Activated CD8-positive, alpha-beta T cell treated with anti-CD3 and anti-CD28 coated beads for 36 hours (primary cell): ENCODE measurements at regions of chr15 and their contacts with region 1.

Region 1: GRCh38 chr15:80173022-80173759 is 20.4 kb downstream of the FAH start:
- DNase-seq: peak; percentile 82
- ATAC-seq: peak; percentile 95
- H3K4me3 Mint-ChIP-seq: no peak overlapping the region
- H3K27ac Mint-ChIP-seq: no peak overlapping the region
- H3K4me1 Mint-ChIP-seq: no peaks in the 10 kb centered on the region
- H3K27me3 Mint-ChIP-seq: no peaks in the 10 kb centered on the region
- CTCF ChIP-seq: peak; percentile 67

Region 2: DNA sequence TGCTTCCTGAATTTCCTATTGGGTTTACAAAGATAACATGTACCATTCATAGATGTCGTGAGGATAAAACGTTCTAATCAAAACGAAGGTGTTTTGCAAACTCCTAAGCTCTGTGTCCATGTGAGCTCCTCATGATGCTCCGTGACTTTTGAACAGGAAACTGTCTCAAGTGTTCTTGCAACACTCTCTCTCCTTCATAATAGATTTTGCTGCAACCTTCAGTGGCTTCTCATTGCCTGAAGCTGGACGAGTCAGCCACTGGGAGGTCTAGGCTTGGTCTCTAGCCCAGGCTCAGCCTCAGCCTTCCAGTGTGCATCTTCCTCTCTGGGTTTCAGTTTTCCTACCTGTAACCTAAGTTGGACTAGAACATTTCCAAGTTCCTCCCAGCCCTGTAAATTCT is 183.5 kb before region 1 on chr15:
- CTCF ChIA-PET with region 1: interaction called, 16 read pairs
- POLR2A ChIA-PET with region 1: interaction called, 3 read pairs
- intact Hi-C with region 1: no loop called
- DNase-seq: no peak
- ATAC-seq: no peak
- H3K4me3 Mint-ChIP-seq: no peak overlapping the region
- H3K27ac Mint-ChIP-seq: no peak overlapping the region
- H3K4me1 Mint-ChIP-seq: peaks cover 6% of the 10 kb centered on the region
- H3K27me3 Mint-ChIP-seq: no peaks in the 10 kb centered on the region
- CTCF ChIP-seq: no peak

Region 3: GRCh38 chr15:80210612-80211573 is 37.7 kb after region 1 on chr15:
- CTCF ChIA-PET with region 1: no interaction called
- POLR2A ChIA-PET with region 1: no interaction called
- intact Hi-C with region 1: no loop called
- DNase-seq: no peak
- ATAC-seq: no peak
- H3K4me3 Mint-ChIP-seq: no peak overlapping the region
- H3K27ac Mint-ChIP-seq: no peak overlapping the region
- H3K4me1 Mint-ChIP-seq: no peaks in the 10 kb centered on the region
- H3K27me3 Mint-ChIP-seq: peaks cover 25% of the 10 kb centered on the region
- CTCF ChIP-seq: no peak